Dorsolateral prefrontal cortex (tissue), 120 donors: ENCODE measurements at regions of chr1 and their contacts with region 1.

Region 1: DNA sequence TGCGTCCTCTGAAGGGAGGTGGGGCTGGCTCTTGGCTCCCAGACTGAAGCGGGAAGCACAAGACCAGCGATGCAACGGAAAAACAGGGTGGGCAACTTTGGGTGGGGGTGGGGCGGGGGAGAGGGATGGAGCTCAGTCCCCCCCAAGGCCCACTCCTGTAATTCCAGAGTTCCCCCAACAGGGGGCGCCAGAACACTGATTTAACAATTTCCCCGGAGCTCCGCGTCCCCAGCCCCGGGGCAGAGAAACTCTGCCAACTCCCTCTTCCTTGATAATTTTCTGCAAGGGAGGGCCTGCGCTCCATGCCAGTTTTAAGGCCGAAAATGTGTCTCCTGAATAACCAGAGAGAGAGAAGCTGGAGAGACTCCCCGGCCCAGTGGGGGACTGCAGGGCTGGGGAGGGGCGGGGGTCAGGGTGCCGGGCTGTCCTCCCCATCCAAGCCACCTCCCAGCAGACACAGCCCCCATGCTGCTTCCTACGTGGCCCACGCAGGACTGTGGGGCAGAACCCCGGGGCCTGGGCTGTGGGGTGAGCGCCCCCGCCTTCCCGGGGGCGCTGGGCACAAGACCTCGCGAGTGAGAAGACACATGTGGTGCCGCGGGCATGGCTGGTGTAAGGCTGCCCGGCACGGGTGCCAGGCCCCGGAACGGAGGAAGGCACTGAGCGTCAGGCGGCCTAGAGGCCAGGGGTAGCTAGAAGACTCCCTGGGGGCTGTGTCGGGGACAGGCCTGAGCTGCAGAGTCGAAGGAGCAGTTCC is 51.4 kb downstream of the KIF21B start:
- DNase-seq: peak; percentile 57 to 83 (median 74)
- H3K4me3 ChIP-seq: peak overlapping the region in 27 of 59 donors; percentile 3 to 48 (median 27)
- H3K27ac ChIP-seq: peak overlapping the region in 31 of 59 donors; percentile 10 to 79 (median 55)
- H3K27me3 ChIP-seq: no peaks in the 10 kb centered on the region
- CTCF ChIP-seq: peak; percentile 87 to 100 (median 98)

Region 2: GRCh38 chr1:201042779-201043461 is 70.8 kb after region 1 on chr1:
- intact Hi-C with region 1: loop called (anchors 1 kb)
- DNase-seq: peak in 9 of 10 donors; percentile 29 to 88 (median 78)
- H3K4me3 ChIP-seq: peak overlapping the region in 1 of 59 donors; percentile 6
- H3K27ac ChIP-seq: peak overlapping the region in 26 of 59 donors; percentile 0 to 67 (median 33)
- H3K27me3 ChIP-seq: no peaks in the 10 kb centered on the region
- CTCF ChIP-seq: peak; percentile 69 to 97 (median 91)

Region 3: DNA sequence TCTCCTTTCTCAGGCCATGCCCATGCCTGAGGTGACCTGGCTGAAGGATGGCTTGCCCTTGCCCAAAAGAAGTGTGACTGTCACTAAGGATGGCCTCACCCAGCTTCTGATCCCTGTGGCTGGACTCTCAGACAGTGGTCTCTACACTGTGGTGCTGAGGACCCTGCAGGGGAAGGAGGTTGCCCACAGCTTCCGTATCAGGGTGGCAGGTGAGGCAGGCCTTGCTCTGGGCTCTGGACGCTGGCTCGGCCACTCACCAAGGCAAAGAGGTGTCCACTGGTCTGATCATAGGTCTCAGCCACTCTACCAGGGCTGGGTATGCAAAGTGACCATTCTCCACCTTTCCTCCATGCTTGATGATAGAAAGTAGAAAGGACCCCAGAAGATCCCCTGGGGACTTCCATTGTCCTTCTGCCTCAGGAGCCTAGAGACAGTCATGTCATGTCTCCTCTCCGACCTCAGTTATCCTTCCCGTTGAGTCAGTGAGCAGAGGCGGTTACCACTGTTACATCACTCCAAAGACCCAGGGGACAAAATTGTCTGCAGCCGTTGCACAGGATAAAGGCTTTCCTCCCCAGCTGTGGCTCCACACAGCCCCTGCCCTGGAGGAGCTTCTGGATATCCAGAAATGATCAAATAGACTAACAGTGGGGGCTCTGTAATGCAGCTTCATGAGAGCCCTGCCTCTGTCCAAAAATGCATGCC is 252.7 kb after region 1 on chr1:
- intact Hi-C with region 1: loop called in 1 of 2 experiments (anchors 5 kb)
- DNase-seq: no peak
- H3K4me3 ChIP-seq: no peak overlapping the region
- H3K27ac ChIP-seq: no peak overlapping the region
- H3K27me3 ChIP-seq: no peaks in the 10 kb centered on the region
- CTCF ChIP-seq: no peak